SK-N-SH (cell line): ENCODE measurements at regions of chrX and their contacts with region 1.

Region 1: DNA sequence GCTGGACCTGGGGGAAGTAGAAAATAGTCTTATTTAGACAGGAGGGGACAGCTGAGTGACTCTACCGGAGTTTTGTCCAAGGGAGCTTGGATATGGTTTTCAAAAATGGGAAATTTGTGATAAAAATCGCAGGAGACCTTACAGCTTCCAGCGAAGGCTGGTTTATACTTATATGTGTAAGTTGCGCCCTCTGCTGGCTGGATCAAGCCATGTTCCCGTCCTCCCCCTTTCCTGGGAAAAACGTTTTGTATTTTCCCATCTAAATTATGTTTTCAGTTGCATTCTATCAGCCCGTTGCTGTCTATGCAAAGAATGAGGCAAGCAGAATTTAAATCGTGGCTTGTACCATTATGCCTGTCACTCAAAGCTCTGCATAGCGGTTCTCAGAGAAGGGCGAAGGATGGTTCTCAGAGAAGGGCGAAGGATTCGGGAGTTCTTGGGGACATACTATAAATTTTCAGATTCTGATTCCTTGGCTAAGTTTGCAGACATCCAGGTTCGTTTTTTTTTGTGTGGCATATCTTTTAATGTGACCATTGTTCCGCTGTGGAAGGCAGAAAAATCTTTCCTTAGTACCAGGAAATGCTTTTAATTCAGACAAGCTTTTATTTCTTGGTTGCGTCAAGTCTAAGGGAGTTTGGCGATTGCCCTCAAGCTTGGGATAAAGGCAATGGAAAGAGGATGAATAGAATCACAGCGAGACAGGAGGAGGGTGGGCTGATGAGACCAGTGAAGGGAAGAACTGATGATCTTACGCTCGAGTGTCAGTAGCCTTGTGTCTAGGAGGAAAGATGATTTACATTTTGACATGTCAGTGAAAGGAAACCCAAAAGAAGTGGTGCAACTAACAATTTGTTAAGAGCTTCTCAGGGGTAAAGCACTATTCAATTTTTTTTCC is 128.5 kb upstream of the ARX start:
- DNase-seq: peak; percentile 51
- H3K4me3 ChIP-seq: no peak overlapping the region
- H3K27ac ChIP-seq: no peak overlapping the region
- H3K4me1 ChIP-seq: no peaks in the 10 kb centered on the region; a peak in 1 of 4 replicates
- H3K27me3 ChIP-seq: peaks cover under 1% of the 10 kb centered on the region; the same call in 1 of the 2 replicates
- CTCF ChIP-seq: peak; percentile 85
- EP300 ChIP-seq: no peak
- RAD21 ChIP-seq: peak; percentile 80

Region 2: GRCh38 chrX:24371391-24371972 is 772.8 kb before region 1 on chrX:
- CTCF ChIA-PET with region 1: interaction called, 21 read pairs
- POLR2A ChIA-PET with region 1: no interaction called
- DNase-seq: peak; percentile 69
- H3K4me3 ChIP-seq: no peak overlapping the region
- H3K27ac ChIP-seq: no peak overlapping the region
- H3K4me1 ChIP-seq: no peaks in the 10 kb centered on the region; a peak in 1 of 4 replicates
- H3K27me3 ChIP-seq: no peaks in the 10 kb centered on the region; the same call in 1 of the 2 replicates
- CTCF ChIP-seq: peak; percentile 66
- EP300 ChIP-seq: no peak
- RAD21 ChIP-seq: peak; percentile 57

Region 3: DNA sequence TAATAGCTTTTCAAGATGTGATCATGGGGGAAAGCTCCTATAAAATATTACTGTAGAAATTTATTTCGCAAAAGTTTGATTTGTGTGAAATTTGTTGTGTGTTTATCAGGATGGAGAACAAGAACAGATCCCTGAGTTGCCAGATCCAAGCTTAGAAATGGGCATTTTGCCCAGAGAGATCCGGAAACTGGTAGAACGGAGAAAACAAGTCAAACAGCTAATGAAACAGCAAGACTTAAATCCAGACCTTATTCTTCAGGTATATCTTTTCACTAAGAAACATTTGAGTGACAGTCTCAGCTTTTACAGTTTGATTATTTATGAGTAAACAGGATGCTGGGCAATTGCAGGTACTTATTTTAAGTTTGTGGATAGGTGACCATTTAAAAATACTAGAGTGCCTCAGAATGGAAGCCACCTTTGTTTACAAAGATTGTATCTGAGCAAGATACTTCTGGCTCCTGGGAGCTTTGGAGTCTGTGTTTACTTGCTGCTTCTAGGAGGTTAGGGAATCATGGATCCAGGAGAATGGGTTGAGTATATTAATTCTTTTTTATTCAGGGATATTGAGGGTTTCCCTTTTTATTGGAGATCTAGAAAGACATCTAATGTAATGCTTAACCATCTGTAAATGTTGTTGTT is 396.0 kb before region 1 on chrX:
- CTCF ChIA-PET with region 1: interaction called, 25 read pairs
- POLR2A ChIA-PET with region 1: no interaction called
- DNase-seq: no peak
- H3K4me3 ChIP-seq: no peak overlapping the region
- H3K27ac ChIP-seq: no peak overlapping the region
- H3K4me1 ChIP-seq: no peaks in the 10 kb centered on the region
- H3K27me3 ChIP-seq: no peaks in the 10 kb centered on the region; the same call in 1 of the 2 replicates
- CTCF ChIP-seq: no peak
- EP300 ChIP-seq: no peak
- RAD21 ChIP-seq: no peak

Region 4: GRCh38 chrX:25020905-25021449 is 123.3 kb before region 1 on chrX:
- CTCF ChIA-PET with region 1: interaction called, 10 read pairs
- POLR2A ChIA-PET with region 1: no interaction called
- DNase-seq: peak; percentile 88
- H3K4me3 ChIP-seq: peak overlapping the region; percentile 28 to 39
- H3K27ac ChIP-seq: no peak overlapping the region
- H3K4me1 ChIP-seq: peaks cover 0 to 9% of the 10 kb centered on the region in 2 experiments; a peak in 1 of 4 replicates
- H3K27me3 ChIP-seq: peaks cover 77% of the 10 kb centered on the region
- CTCF ChIP-seq: peak; percentile 69
- EP300 ChIP-seq: no peak
- RAD21 ChIP-seq: peak; percentile 62

Region 5: GRCh38 chrX:25158635-25159034 is 14.3 kb after region 1 on chrX:
- CTCF ChIA-PET with region 1: interaction called, 11 read pairs
- POLR2A ChIA-PET with region 1: no interaction called
- DNase-seq: no peak
- H3K4me3 ChIP-seq: no peak overlapping the region
- H3K27ac ChIP-seq: no peak overlapping the region
- H3K4me1 ChIP-seq: no peaks in the 10 kb centered on the region
- H3K27me3 ChIP-seq: no peaks in the 10 kb centered on the region
- CTCF ChIP-seq: no peak
- EP300 ChIP-seq: no peak
- RAD21 ChIP-seq: no peak